ENCODE measurements at regions of chr12 and their contacts with region 1.

Region 1: DNA sequence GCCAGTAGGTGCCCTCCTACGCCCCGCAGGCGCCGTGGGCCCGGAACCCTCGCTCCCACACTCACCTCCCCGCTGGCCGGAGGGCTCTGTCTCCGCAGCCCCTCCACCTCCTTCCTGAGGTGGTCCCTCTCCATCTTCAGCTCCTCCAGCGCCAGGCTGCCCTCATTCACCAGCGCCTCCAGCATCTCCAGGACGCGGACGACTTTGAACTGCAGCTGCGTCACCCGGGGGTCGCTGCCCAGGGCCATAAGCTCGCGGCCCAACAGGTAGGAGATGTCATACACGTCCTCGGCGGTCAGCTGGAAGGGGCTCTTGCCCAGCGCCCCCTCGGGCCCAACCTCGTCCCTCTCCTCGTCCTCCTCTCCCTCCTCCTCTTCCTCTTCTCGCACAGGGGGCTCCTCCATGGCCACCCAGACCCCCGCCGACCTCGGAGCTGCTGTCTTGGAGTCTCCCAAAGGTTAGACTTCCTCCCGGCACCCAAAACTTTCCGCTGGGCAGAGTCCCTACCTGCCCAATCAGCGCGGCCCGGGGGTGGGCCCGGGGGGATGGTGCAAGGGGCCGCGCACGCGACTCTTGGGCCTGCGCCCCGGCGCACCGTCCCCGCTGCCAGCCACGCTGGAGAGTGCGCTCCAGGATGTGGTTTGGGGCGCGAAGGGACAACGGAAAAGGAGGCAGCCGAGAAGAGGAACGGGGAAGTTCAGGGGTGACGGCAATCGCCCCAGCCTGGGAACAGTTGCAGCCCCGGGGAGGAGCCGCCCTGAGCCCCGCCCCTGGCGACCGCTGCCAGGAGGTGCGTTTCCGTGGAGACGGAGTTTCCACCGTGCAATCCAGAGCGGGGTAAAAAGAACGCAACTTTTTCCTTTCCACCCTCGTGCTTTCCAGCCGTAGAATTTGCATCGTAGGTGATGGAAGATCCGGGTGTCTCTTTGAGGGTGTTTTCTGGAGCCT is at the start of gene RILPL2:
- DNase-seq: peak; percentile 91
- H3K4me3 Mint-ChIP-seq: peak within 1 kb of the TSS; percentile 99
- H3K27ac Mint-ChIP-seq: peak within 1 kb of the TSS; percentile 99
- H3K4me1 Mint-ChIP-seq: peaks cover 39% of the 10 kb centered on the region
- H3K27me3 Mint-ChIP-seq: no peaks in the 10 kb centered on the region
- total RNA-seq, gene RILPL2: 20.1 and 20.6 TPM in 2 replicates

Region 2: DNA sequence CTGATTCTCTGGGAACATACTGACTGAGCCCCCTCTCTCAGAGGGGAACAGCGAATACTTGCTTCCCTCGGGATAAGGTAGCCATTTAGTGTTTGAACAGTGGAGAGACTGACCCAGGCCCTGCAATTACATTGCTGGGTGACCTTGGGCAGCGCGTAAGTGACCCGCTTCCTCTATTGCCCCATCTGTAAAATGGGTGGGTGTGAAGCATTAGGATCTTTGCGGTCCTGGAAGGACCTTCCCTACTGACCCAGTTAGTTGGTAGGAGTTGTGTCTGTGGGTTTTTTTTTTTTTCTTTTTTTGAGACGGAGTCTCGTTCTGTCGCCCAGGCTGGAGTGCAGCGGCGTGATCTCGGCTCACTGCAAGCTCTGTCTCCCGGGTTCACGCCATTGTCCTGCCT is 53.6 kb before region 1 on chr12:
- intact Hi-C with region 1: loop called (anchors 1 kb)
- DNase-seq: no peak
- H3K4me3 Mint-ChIP-seq: peak overlapping the region; percentile 72
- H3K27ac Mint-ChIP-seq: no peak overlapping the region
- H3K4me1 Mint-ChIP-seq: peaks cover 16% of the 10 kb centered on the region
- H3K27me3 Mint-ChIP-seq: no peaks in the 10 kb centered on the region

Region 3: DNA sequence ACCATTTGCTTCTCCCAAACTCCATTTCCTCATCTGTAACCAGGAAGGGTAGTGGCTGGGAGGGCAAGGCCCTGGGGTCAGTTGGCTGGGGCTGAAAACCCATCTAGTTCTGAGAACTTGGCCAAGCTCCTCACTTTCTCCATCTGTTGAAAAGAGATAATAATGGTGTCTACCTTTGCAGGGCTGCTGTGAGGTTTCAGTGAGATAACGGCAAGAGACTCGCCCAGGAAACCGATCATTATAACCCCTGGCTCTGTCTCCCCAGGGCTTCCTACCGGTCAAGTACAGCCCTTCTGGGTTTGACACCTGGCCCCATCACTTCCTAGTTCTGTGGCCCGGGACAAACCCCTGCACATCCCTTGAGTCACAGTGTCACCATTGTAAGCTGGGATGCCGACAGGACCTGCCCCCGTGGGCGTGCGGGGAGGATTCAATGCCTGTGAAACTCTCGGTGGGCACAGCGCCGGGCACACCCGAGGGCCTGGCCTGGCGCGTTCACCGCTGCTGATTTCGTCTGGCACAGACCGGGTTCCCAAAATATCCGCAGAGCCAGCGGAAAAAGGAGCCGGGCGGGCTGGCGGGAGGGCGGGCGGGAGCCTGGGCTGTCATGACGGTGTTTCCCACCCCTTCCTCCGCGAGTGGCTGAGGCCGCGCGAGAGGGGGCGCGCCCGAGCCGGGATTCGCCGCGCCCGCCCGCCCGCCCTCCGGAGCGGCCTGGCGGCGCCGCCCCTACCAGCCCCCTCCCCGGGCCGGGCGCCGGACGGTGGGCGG is 47.9 kb before region 1 on chr12:
- intact Hi-C with region 1: loop called (anchors 1 kb)
- DNase-seq: peak; percentile 78
- H3K4me3 Mint-ChIP-seq: peak overlapping the region; percentile 82
- H3K27ac Mint-ChIP-seq: peak overlapping the region; percentile 93
- H3K4me1 Mint-ChIP-seq: peaks cover 39% of the 10 kb centered on the region
- H3K27me3 Mint-ChIP-seq: no peaks in the 10 kb centered on the region

Region 4: GRCh38 chr12:123457980-123458783 is 21.9 kb after region 1 on chr12 and contains the start of gene SNRNP35:
- intact Hi-C with region 1: loop called (anchors 1 kb)
- DNase-seq: peak; percentile 79
- H3K4me3 Mint-ChIP-seq: peak within 1 kb of the TSS; percentile 95
- H3K27ac Mint-ChIP-seq: peak within 1 kb of the TSS; percentile 99
- H3K4me1 Mint-ChIP-seq: peaks cover 17% of the 10 kb centered on the region
- H3K27me3 Mint-ChIP-seq: no peaks in the 10 kb centered on the region
- total RNA-seq, gene SNRNP35: 31.5 and 34.5 TPM in 2 replicates

Region 5: GRCh38 chr12:123468562-123469185 is 32.4 kb after region 1 on chr12:
- intact Hi-C with region 1: no loop called
- DNase-seq: no peak
- H3K4me3 Mint-ChIP-seq: no peak overlapping the region
- H3K27ac Mint-ChIP-seq: no peak overlapping the region
- H3K4me1 Mint-ChIP-seq: peaks cover 10% of the 10 kb centered on the region
- H3K27me3 Mint-ChIP-seq: no peaks in the 10 kb centered on the region

Region 6: DNA sequence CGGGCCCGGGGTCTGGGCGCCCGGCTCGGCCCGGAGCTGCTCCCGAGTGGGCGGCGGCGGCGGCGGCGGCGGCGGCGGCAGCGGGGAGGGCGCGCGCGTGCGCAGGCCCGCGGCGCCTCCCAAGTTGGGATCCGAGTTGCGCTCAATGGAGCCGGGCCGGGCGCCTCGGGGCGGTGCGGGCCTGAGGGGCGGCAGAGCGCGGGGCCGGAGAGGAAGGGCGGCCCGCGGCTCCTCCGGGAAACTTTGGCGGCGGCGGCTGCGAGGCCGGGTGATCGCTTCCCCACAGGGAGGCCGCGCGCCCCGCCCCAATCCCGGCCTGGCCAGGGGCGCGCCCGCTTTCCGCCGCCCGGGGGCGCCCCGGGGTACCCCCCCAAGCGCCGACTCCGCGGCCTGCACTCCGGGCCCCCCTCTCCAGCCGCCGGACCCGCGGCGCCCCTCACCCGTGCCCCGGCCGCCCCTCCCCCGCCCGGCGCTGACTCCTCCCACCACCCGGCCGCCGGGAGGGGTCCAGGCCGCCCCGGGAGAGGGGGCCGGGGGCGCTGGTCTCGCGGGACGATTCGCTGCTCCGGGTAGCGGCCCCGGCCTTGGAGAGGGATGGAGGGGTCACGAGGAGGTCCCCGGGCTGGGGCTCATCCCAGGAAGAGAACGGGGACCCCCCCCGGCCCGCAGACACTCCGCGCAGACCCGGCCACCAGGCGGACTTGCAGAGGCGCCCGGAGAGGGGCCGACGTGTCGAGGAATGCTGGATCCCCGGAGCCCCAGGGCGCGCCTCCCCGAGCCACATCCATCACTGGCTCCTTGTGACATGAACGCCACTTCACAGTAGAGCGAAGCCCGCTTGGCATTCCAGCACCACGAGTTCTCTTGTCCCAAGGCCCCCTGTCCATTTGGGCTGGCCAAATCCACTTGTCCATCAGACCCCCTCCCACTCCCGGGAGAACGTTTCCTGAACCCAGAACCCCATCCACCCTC is 97.7 kb after region 1 on chr12 and contains the start of gene RILPL1:
- intact Hi-C with region 1: loop called (anchors 10 kb)
- DNase-seq: peak; percentile 22
- H3K4me3 Mint-ChIP-seq: peak within 1 kb of the TSS; percentile 85
- H3K27ac Mint-ChIP-seq: peak within 1 kb of the TSS; percentile 74
- H3K4me1 Mint-ChIP-seq: peaks cover 25% of the 10 kb centered on the region
- H3K27me3 Mint-ChIP-seq: peaks cover 18% of the 10 kb centered on the region
- total RNA-seq, gene RILPL1: 4.4 and 4.5 TPM in 2 replicates

Region 7: GRCh38 chr12:123601602-123602489 is 165.6 kb after region 1 on chr12 and contains the start of gene DDX55:
- intact Hi-C with region 1: loop called (anchors 5 kb)
- DNase-seq: peak; percentile 83
- H3K4me3 Mint-ChIP-seq: peak within 1 kb of the TSS; percentile 87
- H3K27ac Mint-ChIP-seq: peak within 1 kb of the TSS; percentile 90
- H3K4me1 Mint-ChIP-seq: peaks cover 36% of the 10 kb centered on the region
- H3K27me3 Mint-ChIP-seq: no peaks in the 10 kb centered on the region
- total RNA-seq, gene DDX55: 72.1 and 72.3 TPM in 2 replicates

Region 8: GRCh38 chr12:123633379-123634141 is 197.3 kb after region 1 on chr12 and contains the starts of genes EIF2B1 and GTF2H3:
- intact Hi-C with region 1: loop called (anchors 1 kb)
- DNase-seq: peak; percentile 96
- H3K4me3 Mint-ChIP-seq: peak within 1 kb of the TSS; percentile 98
- H3K27ac Mint-ChIP-seq: peak within 1 kb of the TSS; percentile 97
- H3K4me1 Mint-ChIP-seq: peaks cover 35% of the 10 kb centered on the region
- H3K27me3 Mint-ChIP-seq: no peaks in the 10 kb centered on the region
- total RNA-seq, gene EIF2B1: 74.8 and 76.5 TPM in 2 replicates
- total RNA-seq, gene GTF2H3: 65.8 and 66.1 TPM in 2 replicates

Region 9: DNA sequence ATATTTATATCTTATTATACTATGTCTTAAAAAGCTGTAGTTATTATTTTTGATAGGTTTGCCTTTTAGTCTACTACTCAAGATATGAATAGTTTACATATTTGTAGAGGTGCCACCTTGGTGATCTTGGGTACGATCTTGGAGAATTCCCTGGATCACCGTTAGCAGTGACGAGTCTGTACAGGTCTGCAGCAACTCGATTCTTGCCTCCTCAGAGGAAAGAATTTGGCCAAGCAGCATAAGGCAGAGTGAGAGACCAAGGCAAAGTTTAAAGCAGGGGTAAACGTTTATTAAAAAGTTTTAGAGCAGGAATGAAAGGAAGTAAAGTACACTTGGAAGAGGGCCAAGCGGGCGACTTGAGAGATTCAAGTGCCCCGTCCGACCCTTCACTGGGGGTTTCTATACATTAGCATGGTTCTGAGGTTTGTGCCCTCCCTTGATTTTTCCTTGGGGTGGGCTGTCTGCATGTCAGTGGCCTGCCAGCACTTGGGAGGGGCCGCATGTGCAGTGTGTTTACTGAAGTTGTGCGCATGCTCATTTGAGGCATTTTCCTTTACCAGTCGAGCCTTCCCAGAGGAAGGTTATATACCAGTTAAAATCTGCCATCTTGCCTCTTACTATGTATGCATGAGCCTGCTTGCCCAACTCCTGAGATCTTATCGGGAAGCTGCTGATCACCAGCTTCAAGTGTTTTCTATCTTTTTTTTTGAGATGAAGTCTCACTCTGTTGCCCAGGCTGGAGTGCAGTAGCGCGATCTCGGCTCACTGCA is 231.7 kb after region 1 on chr12:
- intact Hi-C with region 1: no loop called
- DNase-seq: no peak
- H3K4me3 Mint-ChIP-seq: no peak overlapping the region
- H3K27ac Mint-ChIP-seq: no peak overlapping the region
- H3K4me1 Mint-ChIP-seq: peaks cover 15% of the 10 kb centered on the region
- H3K27me3 Mint-ChIP-seq: no peaks in the 10 kb centered on the region

Measured in activated T-helper 1 cell treated with anti-CD3 and anti-CD28 coated beads, Interleukin-12 subunit alpha, Interleukin-12 subunit beta, Interleukin-2, Interleukin-4 antibody, amounts not matched to agents 30 ng/mL and 10 ng/mL and 1 ng/mL, durations not matched to agents 14 hours and 24 hours and 36 hours (primary cell).